OCI-LY7 (cell line): ENCODE measurements at regions of chr19 and their contacts with region 1.

Region 1: DNA sequence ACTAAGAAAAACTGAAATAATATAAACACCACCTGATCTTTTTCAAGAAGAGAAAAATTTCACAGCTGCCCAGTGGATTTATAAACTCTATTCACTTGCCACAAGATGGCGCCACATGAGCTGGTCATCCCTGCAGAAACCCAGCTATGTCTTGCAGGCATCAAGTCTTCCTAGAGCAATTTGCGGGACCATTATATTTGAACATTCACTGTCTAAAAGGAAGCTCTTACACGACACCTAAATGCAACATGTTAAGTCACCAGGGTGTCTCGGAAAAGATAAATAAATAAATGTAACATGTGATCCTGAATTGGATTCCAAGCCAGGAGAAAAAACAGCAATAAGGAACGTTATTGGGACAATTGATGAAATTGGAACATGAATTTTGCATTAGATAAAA is 20.3 kb upstream of the AKT2 start:
- DNase-seq: peak; percentile 91
- H3K4me3 ChIP-seq: no peak overlapping the region
- H3K27ac ChIP-seq: no peak overlapping the region
- H3K4me1 ChIP-seq: peaks cover 4% of the 10 kb centered on the region
- CTCF ChIP-seq: peak; percentile 96

Region 2: DNA sequence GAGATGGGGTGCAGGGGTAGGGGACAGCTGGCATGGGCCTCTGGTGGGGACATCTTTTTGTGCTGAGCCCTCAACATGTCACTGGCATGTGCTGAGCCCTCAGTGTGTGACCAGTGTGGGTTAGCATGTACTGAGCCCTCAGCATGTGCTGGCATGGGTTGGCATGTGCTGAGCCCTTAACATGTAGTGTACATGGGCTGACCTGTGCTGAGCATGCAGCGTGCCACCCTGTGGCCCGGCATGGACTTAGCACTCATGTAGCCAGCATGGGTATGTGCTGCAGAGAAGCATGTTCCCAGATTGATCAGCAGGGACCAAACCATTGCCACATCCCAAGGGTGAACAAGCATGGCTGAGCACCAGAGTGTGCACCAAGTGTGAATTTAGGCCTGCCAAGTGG is 73.1 kb after region 1 on chr19:
- CTCF ChIA-PET with region 1: no interaction called
- POLR2A ChIA-PET with region 1: no interaction called
- intact Hi-C with region 1: loop called (anchors 5 kb)
- DNase-seq: peak; percentile 41
- H3K4me3 ChIP-seq: no peak overlapping the region
- H3K27ac ChIP-seq: no peak overlapping the region
- H3K4me1 ChIP-seq: no peaks in the 10 kb centered on the region
- CTCF ChIP-seq: peak; percentile 57

Region 3: DNA sequence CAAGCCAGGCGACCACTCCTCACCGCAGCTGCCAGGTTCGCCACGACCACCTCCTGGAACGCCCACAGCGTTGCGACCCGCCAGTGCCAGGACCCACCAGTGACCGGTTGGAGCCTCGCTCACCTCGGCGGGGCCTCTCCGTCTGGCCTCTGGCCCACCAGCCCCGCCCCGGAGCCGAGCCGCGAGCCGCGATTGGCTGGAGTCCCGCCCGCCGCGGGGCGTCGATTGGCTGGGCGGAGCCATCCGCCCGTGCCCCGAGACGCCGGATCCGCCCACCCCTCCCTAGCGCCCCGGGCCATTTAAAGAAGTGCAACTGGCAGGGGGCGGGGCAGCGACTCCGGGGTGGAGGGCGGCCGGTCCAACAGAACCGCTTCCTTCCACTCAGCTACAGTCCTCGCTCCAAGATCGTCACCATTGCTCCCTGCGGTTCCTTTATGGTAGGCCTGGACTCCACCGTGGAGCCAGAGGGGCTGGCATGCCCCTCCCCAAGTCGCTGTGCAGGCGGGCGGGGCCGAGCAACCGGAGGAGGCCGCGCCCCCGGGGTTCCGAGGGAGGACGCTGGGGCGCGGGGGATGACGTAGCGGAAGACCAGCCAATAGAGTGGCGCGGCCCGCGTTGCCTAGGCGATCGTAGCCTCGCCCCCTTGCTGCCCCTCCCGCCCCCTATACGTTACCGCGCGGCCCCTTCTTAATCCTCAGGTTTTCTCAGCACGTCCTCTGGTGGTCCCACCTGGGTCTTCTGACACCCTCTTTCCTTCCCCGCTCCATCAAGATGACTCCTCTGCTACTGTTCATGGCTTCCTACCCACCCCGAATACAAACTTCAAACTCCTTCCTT is 139.0 kb after region 1 on chr19 and contains the start of gene SERTAD3:
- CTCF ChIA-PET with region 1: no interaction called
- POLR2A ChIA-PET with region 1: no interaction called
- intact Hi-C with region 1: loop called (anchors 2 kb)
- DNase-seq: peak; percentile 98
- H3K4me3 ChIP-seq: peak within 1 kb of the TSS; percentile 85
- H3K27ac ChIP-seq: peak within 1 kb of the TSS; percentile 88
- H3K4me1 ChIP-seq: peaks cover 21% of the 10 kb centered on the region
- CTCF ChIP-seq: peak; percentile 72
- total RNA-seq, gene SERTAD3: 12.2 and 15.7 TPM in 2 replicates

Region 4: GRCh38 chr19:40523322-40524047 is 218.1 kb after region 1 on chr19:
- CTCF ChIA-PET with region 1: no interaction called
- POLR2A ChIA-PET with region 1: no interaction called
- intact Hi-C with region 1: loop called (anchors 1 kb)
- DNase-seq: peak; percentile 84
- H3K4me3 ChIP-seq: no peak overlapping the region
- H3K27ac ChIP-seq: no peak overlapping the region
- H3K4me1 ChIP-seq: peaks cover 10% of the 10 kb centered on the region
- CTCF ChIP-seq: peak; percentile 87